ENCODE measurements at regions of chr2 and their contacts with region 1.

Region 1: DNA sequence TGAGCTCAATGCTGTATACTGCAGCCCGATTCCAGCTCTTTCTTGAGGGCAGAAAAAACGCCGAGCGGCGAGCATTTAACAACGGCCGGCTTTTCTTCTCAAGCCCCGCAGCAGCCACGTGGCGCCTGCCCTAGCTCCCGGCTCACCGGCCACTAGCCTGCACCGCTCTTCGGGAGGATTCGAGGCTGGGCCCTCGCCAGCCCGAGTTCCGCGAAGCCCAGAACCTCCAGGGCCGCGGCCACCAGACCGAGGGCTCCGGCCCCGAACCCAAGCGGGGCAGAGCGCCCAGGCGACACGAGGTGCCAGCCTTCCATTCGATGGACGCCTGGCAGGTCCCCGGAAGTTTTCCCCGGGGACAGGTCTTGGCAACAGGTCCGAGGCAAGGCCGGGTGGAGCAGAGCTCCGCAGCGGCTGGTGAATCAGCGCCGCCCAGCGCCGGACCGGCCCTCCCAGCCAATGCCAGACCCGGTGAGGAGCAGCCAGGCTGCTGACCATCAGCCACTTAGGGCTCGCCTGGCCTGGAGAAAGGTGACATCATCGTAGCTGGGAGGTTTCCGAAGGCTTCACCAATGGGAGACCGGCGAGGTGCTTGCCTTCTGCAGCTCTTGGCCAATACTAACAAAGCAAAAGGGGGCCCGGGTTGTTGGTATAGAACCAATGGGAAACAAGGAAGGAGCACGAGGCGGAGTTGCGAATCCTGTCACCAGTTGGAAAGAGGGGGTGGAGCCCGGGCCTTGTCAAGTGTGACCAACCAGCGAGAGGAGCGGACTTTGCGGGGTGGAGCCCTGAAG is 544 bp upstream of the MXD1 start:
- DNase-seq: peak; percentile 100
- ATAC-seq: peak; percentile 92
- H3K4me3 ChIP-seq: peak overlapping the region; percentile 50
- H3K27ac ChIP-seq: peak overlapping the region; percentile 69
- H3K4me1 ChIP-seq: no peaks in the 10 kb centered on the region; the same call in 1 of the 2 replicates
- H3K27me3 ChIP-seq: no peaks in the 10 kb centered on the region
- CTCF ChIP-seq: no peak; the same call in 1 of the 2 replicates
- POLR2A ChIP-seq: peak; percentile 63
- RAD21 ChIP-seq: no peak; the same call in 1 of the 2 replicates

Region 2: GRCh38 chr2:69933839-69934613 is 19.7 kb after region 1 on chr2:
- CTCF ChIA-PET with region 1: no interaction called
- POLR2A ChIA-PET with region 1: no interaction called
- dilution Hi-C with region 1: no loop called
- in situ Hi-C with region 1: no loop called
- intact Hi-C with region 1: loop called (anchors 2 kb)
- DNase-seq: peak; percentile 93
- ATAC-seq: peak; percentile 87
- H3K4me3 ChIP-seq: peak overlapping the region; percentile 8; the same call in 1 of the 2 replicates
- H3K27ac ChIP-seq: peak overlapping the region; percentile 74
- H3K4me1 ChIP-seq: peaks cover 11% of the 10 kb centered on the region
- H3K27me3 ChIP-seq: no peaks in the 10 kb centered on the region
- CTCF ChIP-seq: no peak
- POLR2A ChIP-seq: peak; percentile 72; the same call in 1 of the 2 replicates
- RAD21 ChIP-seq: no peak

Region 3: GRCh38 chr2:70086838-70087701 is 172.7 kb after region 1 on chr2 and contains the start of gene PCBP1:
- CTCF ChIA-PET with region 1: no interaction called
- POLR2A ChIA-PET with region 1: interaction called, 6 read pairs
- dilution Hi-C with region 1: no loop called
- in situ Hi-C with region 1: no loop called
- intact Hi-C with region 1: loop called (anchors 1 kb)
- DNase-seq: peak; percentile 95
- ATAC-seq: peak; percentile 73
- H3K4me3 ChIP-seq: peak within 1 kb of the TSS; percentile 95
- H3K27ac ChIP-seq: peak within 1 kb of the TSS; percentile 100
- H3K4me1 ChIP-seq: peaks cover 6% of the 10 kb centered on the region
- H3K27me3 ChIP-seq: no peaks in the 10 kb centered on the region
- CTCF ChIP-seq: no peak
- POLR2A ChIP-seq: peak; percentile 76
- RAD21 ChIP-seq: peak; percentile 2; the same call in 1 of the 2 replicates
- total RNA-seq, gene PCBP1: 33.6 and 33.7 TPM in 2 replicates

Region 4: DNA sequence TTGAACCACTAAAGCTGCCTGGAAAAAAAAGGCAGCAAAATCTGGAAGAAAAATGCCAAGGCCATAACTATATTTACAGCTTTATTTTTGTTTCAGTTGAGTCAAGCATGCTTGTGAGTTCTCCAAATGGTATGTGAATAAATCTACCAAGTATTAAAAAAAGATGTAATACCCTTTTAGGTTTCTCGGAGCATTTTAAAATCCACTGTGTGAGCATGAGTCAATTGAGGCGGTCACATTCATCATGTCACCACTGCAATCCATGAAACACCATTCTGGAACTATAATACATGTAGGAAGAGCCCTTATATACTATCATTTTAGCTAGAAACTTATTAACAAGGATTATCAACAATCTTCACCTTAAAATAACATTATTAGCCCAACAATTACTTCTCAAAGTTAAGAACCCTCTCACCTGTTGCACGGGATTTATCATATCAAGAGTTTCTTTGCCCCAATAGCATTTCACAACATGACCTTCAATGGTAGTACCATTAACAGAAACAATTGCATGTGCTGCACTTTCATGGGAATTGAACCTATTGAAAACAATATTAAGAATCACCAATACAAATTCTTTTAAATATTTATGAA is 300.7 kb after region 1 on chr2:
- CTCF ChIA-PET with region 1: no interaction called
- POLR2A ChIA-PET with region 1: no interaction called
- dilution Hi-C with region 1: no loop called
- in situ Hi-C with region 1: no loop called
- intact Hi-C with region 1: loop called (anchors 2 kb)
- DNase-seq: peak; percentile 96
- ATAC-seq: peak; percentile 86
- H3K4me3 ChIP-seq: no peak overlapping the region
- H3K27ac ChIP-seq: no peak overlapping the region
- H3K4me1 ChIP-seq: peaks cover 6% of the 10 kb centered on the region
- H3K27me3 ChIP-seq: no peaks in the 10 kb centered on the region
- CTCF ChIP-seq: no peak
- POLR2A ChIP-seq: no peak
- RAD21 ChIP-seq: no peak

Region 5: DNA sequence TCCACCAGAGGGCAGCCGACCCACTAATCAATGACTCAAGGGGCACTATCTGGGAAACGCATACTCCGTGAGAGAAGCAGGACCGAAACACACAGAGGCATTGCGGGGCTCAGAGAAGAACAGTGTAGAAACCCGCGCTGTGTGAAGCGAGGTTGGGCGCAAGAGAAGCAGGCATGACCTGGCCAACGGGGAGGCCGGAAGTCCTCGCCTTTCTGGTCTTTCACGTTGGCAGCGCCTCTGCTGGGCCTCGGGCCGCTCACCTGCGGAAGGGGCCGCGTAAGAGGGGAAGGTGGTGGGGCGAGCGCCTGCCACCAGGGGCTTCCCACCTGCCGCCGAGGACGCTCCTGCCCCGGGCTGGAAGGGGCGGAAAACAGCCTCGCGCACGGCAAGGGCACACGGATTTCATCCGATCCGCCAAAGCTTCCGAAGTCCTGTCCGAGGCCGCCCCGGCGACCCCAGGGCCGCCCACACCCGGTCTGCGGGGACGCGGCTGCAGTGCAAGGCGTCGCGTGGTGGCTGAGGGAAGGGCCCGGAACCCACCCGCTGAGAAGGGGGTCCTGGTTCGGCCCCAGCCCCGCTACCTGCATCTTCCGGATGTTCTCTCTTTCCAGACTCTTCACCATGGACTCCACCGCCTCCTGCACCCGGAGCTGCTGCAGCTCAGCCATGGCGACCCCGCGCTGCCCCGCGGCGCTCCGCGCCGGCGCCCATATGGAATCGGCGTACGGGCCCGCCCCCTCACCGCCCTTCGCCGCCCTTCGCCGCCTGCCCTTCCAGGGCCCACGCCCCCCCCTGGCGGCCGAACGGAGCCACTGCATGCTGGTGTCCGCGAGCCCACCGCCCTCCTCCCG is 387.2 kb after region 1 on chr2 and contains the start of gene FAM136A:
- CTCF ChIA-PET with region 1: no interaction called
- POLR2A ChIA-PET with region 1: no interaction called
- dilution Hi-C with region 1: no loop called
- in situ Hi-C with region 1: no loop called
- intact Hi-C with region 1: loop called (anchors 5 kb)
- DNase-seq: peak; percentile 56
- ATAC-seq: peak; percentile 99
- H3K4me3 ChIP-seq: peak within 1 kb of the TSS; percentile 90
- H3K27ac ChIP-seq: peak within 1 kb of the TSS; percentile 64
- H3K4me1 ChIP-seq: peaks cover 3% of the 10 kb centered on the region; the same call in 1 of the 2 replicates
- H3K27me3 ChIP-seq: no peaks in the 10 kb centered on the region
- CTCF ChIP-seq: peak; percentile 84
- POLR2A ChIP-seq: no peak
- RAD21 ChIP-seq: peak; percentile 43
- total RNA-seq, gene FAM136A: 19.9 and 35.0 TPM in 2 replicates

Measured in IMR-90 (cell line).